Cardiac septum (tissue), 1 donor: ENCODE measurements at regions of chrX and their contacts with region 1.

Region 1: DNA sequence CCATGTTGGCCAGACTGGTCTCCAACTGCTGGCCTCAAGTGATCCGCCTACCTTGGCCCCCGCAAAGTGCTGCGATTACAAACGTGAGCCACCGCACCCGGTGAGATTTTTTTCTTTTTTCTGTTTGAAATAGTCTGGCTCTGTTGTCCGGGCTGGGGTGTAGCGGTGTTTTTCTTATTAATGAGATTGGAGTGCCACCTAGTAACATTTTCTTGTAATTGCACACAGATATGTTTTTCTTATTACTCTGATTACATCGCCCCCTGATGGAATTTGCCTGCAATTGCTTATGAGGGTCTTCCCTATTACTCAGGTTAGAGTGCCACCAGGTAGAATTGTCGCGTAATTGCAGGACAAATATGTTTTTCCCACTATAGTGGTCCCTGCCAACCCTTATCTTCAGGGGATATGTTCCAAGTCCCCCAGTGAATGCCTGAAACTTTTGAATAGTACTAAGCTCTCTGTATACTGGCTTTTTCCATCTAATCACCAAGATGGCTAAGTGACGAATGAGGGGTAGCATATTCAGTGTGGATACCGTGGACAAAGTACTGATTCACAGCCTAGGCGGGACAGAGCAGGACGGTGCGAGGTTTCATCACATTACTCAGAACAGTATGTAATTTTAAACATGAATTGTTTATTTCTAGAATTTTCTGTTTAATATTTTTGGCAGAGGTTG is 8.6 kb upstream of the PDHA1 start:
- DNase-seq: no peak

Region 2: DNA sequence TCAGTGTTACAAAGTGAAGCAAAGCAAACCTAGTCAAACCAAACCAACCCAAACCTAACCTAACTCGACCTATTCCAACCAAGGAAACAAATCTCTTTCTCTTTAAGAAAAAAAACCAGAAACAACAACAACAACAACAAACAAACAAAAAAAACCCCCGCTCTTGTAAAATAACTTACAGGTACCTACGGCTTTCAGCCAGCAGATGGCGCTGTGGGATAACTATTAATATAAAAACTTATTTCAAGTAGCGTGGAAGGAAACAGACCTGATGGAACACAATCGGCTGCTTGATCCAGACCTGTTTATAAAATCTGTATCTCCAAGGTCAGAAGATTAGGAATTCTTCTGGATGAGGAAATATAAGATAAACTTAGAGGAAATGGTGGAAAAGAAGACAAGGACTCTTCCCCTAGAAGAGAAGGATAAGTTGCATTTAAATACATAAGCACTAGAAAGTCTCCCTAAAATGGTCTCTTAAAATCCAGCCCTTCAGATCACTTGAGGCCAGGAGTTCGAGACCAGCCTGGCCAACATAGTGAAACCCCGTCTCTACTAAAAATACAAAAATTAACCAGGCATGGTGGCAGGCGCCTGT is 944.0 kb before region 1 on chrX:
- intact Hi-C with region 1: loop called (anchors 5 kb)
- DNase-seq: no peak

Region 3: DNA sequence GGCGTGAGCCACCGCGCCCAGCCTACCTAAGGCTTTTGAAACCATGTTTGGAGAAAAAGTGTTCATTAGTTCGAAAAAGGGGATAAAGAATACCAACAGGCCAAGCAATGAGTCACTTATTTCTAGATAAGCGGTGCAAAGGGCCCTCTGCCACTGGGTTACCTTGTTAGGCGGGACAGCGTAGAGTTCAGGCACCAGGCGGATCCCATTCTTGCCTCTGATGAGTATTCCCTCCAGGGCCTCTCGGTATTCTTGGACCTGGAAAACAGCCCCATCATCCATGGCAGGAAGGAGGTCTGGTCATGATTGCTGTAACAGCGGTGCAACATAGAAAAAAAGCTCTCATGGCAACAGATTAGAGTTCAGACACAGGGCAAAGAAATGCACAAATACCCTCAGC is 399.2 kb before region 1 on chrX:
- intact Hi-C with region 1: loop called (anchors 2 kb)
- DNase-seq: no peak

Region 4: DNA sequence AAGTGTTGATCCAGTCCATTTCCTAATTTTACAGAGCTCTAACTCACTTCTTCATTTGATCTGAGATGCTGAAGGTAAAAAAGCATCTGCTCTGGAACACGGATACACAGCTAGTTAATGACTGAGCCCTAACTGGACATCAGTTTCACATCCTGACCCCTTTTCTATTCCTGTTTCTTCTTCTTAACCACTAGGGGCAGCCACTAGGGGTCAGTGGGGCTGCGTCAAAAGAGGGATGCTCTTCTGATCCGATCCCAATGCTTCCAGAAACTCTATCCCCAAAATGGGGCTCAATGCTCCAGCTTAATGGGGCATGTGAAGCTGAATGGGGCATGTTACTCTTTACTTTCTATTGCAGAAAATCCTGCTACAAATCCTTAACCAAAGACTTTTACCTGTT is 317.8 kb before region 1 on chrX:
- intact Hi-C with region 1: loop called (anchors 10 kb)
- DNase-seq: no peak

Region 5: GRCh38 chrX:19566359-19567222 is 231.5 kb after region 1 on chrX:
- intact Hi-C with region 1: no loop called
- DNase-seq: peak; percentile 46